ENCODE measurements at regions of chr5 and their contacts with region 1.

Region 1: GRCh38 chr5:134577796-134578363 is 52.4 kb downstream of the JADE2 start:
- DNase-seq: peak; percentile 62
- H3K4me3 Mint-ChIP-seq: no peak overlapping the region
- H3K27ac Mint-ChIP-seq: peak overlapping the region; percentile 6
- H3K4me1 Mint-ChIP-seq: no peaks in the 10 kb centered on the region
- H3K27me3 Mint-ChIP-seq: no peaks in the 10 kb centered on the region

Region 2: GRCh38 chr5:134184155-134185135 is 393.4 kb before region 1 on chr5:
- intact Hi-C with region 1: loop called (anchors 2 kb)
- DNase-seq: peak; percentile 67
- H3K4me3 Mint-ChIP-seq: no peak overlapping the region
- H3K27ac Mint-ChIP-seq: no peak overlapping the region
- H3K4me1 Mint-ChIP-seq: no peaks in the 10 kb centered on the region
- H3K27me3 Mint-ChIP-seq: peaks cover 8% of the 10 kb centered on the region

Region 3: GRCh38 chr5:134304311-134304710 is 273.6 kb before region 1 on chr5:
- intact Hi-C with region 1: loop called (anchors 1 kb)
- DNase-seq: no peak
- H3K4me3 Mint-ChIP-seq: no peak overlapping the region
- H3K27ac Mint-ChIP-seq: no peak overlapping the region
- H3K4me1 Mint-ChIP-seq: no peaks in the 10 kb centered on the region
- H3K27me3 Mint-ChIP-seq: peaks cover 2% of the 10 kb centered on the region

Region 4: DNA sequence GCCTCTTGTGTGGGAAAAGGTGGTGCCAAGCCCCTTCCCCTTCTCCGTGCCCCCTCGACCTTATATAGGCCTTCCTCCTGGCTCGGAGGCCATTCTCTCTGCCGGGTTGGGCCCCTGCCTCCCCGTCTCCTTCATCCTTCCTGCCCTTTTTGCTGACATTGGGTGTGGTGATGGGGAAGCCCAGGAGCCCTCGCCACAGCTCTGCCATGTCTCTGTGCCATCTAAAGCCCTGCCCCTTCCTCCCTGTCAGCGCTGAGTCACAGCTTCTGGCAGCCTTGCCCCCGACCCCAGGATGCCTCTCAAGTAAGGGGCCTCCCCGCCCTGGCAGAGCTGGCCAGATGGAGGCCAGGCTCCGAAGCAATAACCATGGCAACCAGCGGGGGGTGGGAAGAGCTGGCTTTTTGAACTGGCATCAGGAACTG is 22.0 kb before region 1 on chr5:
- intact Hi-C with region 1: loop called (anchors 1 kb)
- DNase-seq: peak; percentile 68
- H3K4me3 Mint-ChIP-seq: peak overlapping the region; percentile 76
- H3K27ac Mint-ChIP-seq: peak overlapping the region; percentile 97
- H3K4me1 Mint-ChIP-seq: peaks cover 33% of the 10 kb centered on the region
- H3K27me3 Mint-ChIP-seq: no peaks in the 10 kb centered on the region

Region 5: DNA sequence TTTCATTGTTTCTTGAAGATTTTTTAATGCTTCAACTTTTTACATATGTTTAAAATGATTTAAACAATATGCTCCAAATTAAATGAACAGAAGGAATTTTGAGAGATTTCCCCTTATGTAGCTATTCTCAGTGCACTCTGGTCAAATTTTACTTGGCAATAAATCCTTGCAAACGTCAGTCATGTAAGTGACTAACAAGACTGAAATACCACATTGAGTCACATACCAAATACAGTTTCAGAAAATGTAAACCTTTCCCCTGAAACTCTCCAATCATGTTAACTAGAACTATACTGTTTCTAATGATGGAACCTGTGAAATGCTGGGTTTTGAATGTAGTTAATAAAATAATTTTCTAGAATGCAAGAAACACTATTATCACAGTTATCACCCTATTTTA is 25.2 kb after region 1 on chr5:
- intact Hi-C with region 1: no loop called
- DNase-seq: no peak
- H3K4me3 Mint-ChIP-seq: peak overlapping the region; percentile 6
- H3K27ac Mint-ChIP-seq: peak overlapping the region; percentile 36
- H3K4me1 Mint-ChIP-seq: peaks cover 44% of the 10 kb centered on the region
- H3K27me3 Mint-ChIP-seq: no peaks in the 10 kb centered on the region